Upper lobe of right lung (tissue), 1 donor: ENCODE measurements at regions of chr11 and their contacts with region 1.

Region 1: DNA sequence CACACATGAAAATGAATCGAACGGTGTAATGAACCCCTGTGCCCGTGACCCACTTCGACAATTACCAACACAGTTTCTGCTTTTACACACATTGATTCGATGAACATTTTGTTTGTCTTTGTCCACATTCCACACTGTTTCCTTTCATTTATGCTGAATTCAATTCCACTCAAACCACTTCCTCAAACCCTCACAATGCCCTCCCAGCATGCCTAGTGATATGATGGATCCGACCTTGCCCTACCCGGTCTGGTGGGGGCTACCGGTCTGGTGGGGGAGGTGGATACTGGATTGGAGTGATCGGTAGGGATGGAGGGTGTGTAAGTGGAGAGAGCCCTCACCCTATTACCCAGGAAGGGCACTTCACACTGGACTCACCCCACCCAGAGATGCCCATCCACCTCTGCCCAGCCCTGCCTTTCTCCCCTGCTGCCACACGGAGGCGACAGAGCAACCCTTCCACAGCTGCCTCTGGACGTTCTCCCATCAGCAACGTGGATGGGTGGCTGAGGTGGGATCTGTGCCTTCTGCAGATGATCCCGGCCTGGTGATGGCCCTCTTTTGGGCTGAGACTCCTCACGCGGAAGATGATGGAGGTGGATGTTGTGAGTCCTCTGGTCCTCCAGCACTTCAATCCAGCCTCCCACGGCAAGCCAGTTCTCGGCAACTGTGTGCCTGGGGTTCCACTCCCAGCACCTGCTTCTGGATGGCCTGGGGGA is 33.0 kb upstream of the P2RY2 start:
- DNase-seq: peak; percentile 85
- ATAC-seq: peak; percentile 93
- H3K4me3 ChIP-seq: no peak overlapping the region
- H3K27ac ChIP-seq: no peak overlapping the region
- H3K4me1 ChIP-seq: peaks cover 13% of the 10 kb centered on the region
- H3K27me3 ChIP-seq: no peaks in the 10 kb centered on the region
- CTCF ChIP-seq: peak; percentile 86

Region 2: GRCh38 chr11:72831513-72832300 is 353.4 kb before region 1 on chr11:
- intact Hi-C with region 1: loop called (anchors 5 kb)
- DNase-seq: peak; percentile 87
- ATAC-seq: peak; percentile 88
- H3K4me3 ChIP-seq: no peak overlapping the region
- H3K27ac ChIP-seq: peak overlapping the region; percentile 53
- H3K4me1 ChIP-seq: peaks cover 41% of the 10 kb centered on the region
- H3K27me3 ChIP-seq: no peaks in the 10 kb centered on the region
- CTCF ChIP-seq: peak; percentile 92

Region 3: DNA sequence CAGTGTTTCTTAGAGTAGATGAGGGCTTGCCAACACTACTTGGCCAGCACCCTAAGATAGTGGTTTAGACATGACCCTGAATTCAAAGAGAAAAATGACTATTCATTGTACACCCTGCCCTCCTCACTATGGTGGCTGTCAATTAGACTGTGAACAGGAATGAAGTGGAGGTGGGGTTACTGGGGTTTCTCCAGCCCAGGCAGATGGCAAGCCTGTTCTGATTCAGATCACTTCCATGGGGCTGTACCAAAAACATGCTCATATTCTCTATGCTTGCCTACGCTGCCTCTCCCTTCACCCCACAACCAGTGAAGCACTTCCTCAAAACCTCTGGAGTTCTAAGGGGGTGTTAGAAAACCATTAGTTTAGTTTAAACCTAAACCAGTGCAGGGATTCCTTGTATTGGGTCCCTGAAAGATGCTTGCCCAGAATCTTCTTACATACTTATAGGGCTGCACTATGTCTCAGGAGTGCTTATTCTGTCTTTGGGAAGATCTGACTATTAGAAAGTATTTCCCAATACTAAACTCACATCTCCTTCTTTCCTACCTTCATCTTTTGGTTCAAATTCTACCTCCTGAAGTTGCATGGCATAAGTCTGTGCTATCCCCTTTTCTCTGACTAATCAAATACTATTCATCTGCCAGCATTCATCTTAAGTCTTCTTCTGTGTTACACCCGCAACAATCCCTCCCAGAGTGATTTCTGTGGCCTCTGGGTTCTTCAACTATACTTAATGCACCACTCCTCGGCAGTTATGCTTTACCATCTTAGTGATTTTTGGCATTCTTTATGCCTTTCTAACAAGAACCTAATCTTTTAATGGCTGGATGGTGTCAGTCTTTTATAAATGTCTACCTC is 299.1 kb before region 1 on chr11:
- intact Hi-C with region 1: no loop called
- DNase-seq: no peak
- ATAC-seq: no peak
- H3K4me3 ChIP-seq: no peak overlapping the region
- H3K27ac ChIP-seq: no peak overlapping the region
- H3K4me1 ChIP-seq: no peaks in the 10 kb centered on the region
- H3K27me3 ChIP-seq: no peaks in the 10 kb centered on the region
- CTCF ChIP-seq: no peak

Region 4: DNA sequence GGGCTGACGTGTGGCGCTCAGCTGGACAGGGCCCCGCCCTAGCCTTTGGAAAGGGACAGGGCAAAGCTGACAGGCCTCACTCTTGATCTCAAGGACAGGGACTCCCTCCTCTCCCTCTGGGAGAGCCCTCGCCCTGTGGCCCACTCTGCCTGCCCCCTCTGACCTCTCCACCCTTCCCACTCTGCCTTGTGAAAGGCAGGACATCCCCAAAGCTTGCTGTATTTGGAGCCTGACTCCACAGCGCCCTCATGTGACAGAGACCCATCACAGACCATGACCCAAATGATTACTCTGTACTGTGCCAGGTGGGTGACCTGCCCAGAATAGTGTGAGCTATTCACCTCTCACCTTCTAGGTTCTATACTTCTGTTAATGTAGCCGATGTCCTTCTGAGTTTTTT is 51.7 kb after region 1 on chr11:
- intact Hi-C with region 1: loop called (anchors 10 kb)
- DNase-seq: peak; percentile 68
- ATAC-seq: peak; percentile 83
- H3K4me3 ChIP-seq: no peak overlapping the region
- H3K27ac ChIP-seq: no peak overlapping the region
- H3K4me1 ChIP-seq: peaks cover 16% of the 10 kb centered on the region
- H3K27me3 ChIP-seq: no peaks in the 10 kb centered on the region
- CTCF ChIP-seq: peak; percentile 66